ENCODE measurements at regions of chrX and their contacts with region 1.

Region 1: GRCh38 chrX:103845165-103845653 is 13.2 kb upstream of the RAB9B start:
- DNase-seq: peak; percentile 63
- ATAC-seq: peak; percentile 96
- H3K4me3 ChIP-seq: no peak overlapping the region
- H3K27ac ChIP-seq: no peak overlapping the region
- H3K4me1 ChIP-seq: no peaks in the 10 kb centered on the region
- H3K27me3 ChIP-seq: no peaks in the 10 kb centered on the region; the same call in 1 of the 2 replicates
- CTCF ChIP-seq: peak; percentile 81

Region 2: DNA sequence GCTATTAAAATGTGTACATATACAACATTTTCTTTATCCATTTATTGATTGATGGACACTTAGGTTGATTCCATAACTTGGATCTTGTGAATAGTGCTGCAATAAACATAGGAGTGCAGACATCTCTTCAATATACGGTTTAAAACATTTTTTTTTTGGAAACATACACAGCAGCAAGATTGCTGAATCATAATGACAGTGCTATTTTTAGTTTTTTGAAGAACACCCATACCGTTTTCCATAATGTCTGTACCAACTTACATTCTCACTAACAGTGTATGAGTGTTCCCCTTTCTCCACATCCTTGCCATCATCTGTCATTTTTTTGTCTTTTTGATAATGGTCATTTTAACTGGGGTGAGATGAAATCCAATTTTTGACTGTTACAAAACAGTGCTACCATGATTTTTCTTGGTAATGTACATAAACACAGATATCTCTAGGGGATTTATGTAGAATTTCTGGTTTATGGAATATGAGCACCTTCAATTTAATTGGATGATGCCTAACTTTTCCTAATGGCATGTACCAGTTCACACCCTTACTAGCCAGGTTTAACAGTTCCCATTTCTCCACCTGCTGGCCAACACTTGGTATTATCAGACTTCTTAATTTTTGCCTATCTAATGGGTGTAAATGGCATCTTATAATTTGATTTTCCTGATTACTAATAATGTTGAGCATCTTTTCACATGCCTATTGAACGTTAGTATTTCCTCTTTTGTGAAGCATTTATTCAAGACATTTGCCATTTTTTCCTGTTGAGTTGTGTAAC is 96.2 kb after region 1 on chrX:
- CTCF ChIA-PET with region 1: interaction called, 6 read pairs
- POLR2A ChIA-PET with region 1: no interaction called
- in situ Hi-C with region 1: no loop called
- intact Hi-C with region 1: loop called (anchors 1 kb)
- DNase-seq: no peak
- ATAC-seq: peak; percentile 86
- H3K4me3 ChIP-seq: no peak overlapping the region
- H3K27ac ChIP-seq: no peak overlapping the region
- H3K4me1 ChIP-seq: no peaks in the 10 kb centered on the region
- H3K27me3 ChIP-seq: no peaks in the 10 kb centered on the region
- CTCF ChIP-seq: peak; percentile 53; the same call in 1 of the 2 replicates

Region 3: GRCh38 chrX:104113222-104113965 is 268.2 kb after region 1 on chrX:
- CTCF ChIA-PET with region 1: no interaction called
- POLR2A ChIA-PET with region 1: no interaction called
- in situ Hi-C with region 1: no loop called
- intact Hi-C with region 1: loop called (anchors 5 kb)
- DNase-seq: no peak
- ATAC-seq: peak; percentile 93
- H3K4me3 ChIP-seq: peak overlapping the region; percentile 60 to 71
- H3K27ac ChIP-seq: no peak overlapping the region
- H3K4me1 ChIP-seq: no peaks in the 10 kb centered on the region
- H3K27me3 ChIP-seq: peaks cover 18% of the 10 kb centered on the region
- CTCF ChIP-seq: peak; percentile 83

Region 4: GRCh38 chrX:104136241-104137019 is 291.2 kb after region 1 on chrX:
- CTCF ChIA-PET with region 1: no interaction called
- POLR2A ChIA-PET with region 1: no interaction called
- in situ Hi-C with region 1: no loop called
- intact Hi-C with region 1: loop called (anchors 10 kb)
- DNase-seq: peak; percentile 70
- ATAC-seq: peak; percentile 99
- H3K4me3 ChIP-seq: peak overlapping the region; percentile 18 to 32; a peak in 3 of 4 replicates
- H3K27ac ChIP-seq: no peak overlapping the region
- H3K4me1 ChIP-seq: peaks cover 4% of the 10 kb centered on the region
- H3K27me3 ChIP-seq: no peaks in the 10 kb centered on the region
- CTCF ChIP-seq: peak; percentile 82

Region 5: DNA sequence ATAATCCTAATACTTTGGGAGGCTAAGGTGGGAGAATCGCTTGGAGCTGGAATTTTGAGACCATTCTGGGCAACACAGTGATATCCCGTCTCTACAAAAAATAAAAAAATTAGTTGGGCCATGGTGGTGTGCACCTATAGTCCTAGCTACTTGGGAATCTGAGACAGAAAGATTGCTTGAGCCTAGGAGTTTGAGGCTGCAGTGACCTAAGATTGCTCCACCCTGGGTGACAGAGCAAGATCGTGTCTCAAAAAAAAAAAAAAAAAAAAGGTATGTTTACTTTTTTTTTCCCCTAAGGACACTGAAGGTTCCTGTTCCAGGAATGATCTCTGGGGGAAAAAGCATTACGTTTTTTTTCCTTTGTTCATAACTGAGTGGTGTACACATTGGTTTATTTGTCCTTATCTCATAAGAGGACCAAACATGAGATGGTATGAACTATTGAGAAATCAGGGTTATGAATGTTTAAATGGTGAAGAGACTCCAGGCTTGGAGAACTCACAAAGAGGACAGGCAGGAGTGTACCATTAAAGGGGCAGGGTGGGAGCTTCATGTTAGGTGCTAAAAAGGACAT is 600.3 kb after region 1 on chrX:
- CTCF ChIA-PET with region 1: no interaction called
- POLR2A ChIA-PET with region 1: no interaction called
- in situ Hi-C with region 1: no loop called
- intact Hi-C with region 1: no loop called
- DNase-seq: no peak
- ATAC-seq: no peak
- H3K4me3 ChIP-seq: no peak overlapping the region
- H3K27ac ChIP-seq: no peak overlapping the region
- H3K4me1 ChIP-seq: no peaks in the 10 kb centered on the region
- H3K27me3 ChIP-seq: no peaks in the 10 kb centered on the region
- CTCF ChIP-seq: no peak

Region 6: DNA sequence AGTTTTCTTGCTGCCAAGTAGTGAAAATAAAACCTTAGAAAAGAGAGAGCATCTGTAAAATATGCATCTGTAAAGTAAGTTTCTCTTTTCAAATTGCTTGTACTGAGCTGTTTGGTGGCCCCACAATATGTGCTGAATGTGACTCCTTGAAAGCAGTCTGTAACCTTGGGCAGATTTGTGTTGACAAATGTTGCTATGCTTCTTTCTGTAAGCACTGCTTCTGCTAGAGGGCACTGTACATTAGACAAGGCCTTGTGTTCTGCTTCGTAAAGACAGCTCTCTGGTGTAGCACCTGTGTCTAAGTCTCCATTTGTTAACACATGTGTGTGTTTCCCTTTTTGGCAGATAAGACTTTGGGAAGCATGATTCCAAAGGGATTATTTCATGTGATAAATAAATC is 1920.5 kb after region 1 on chrX:
- CTCF ChIA-PET with region 1: no interaction called
- POLR2A ChIA-PET with region 1: no interaction called
- in situ Hi-C with region 1: no loop called
- intact Hi-C with region 1: no loop called
- DNase-seq: no peak
- ATAC-seq: no peak
- H3K4me3 ChIP-seq: no peak overlapping the region
- H3K27ac ChIP-seq: no peak overlapping the region
- H3K4me1 ChIP-seq: no peaks in the 10 kb centered on the region
- H3K27me3 ChIP-seq: no peaks in the 10 kb centered on the region
- CTCF ChIP-seq: no peak

Measured in Panc1 (cell line).